ENCODE measurements at regions of chr12 and their contacts with region 1.

Region 1: GRCh38 chr12:53500776-53501614 is at the start of gene TARBP2:
- DNase-seq: peak; percentile 90 to 100 (median 98)
- ATAC-seq: peak; percentile 77
- H3K4me3 ChIP-seq: peak within 1 kb of the TSS; percentile 66
- H3K4me3 Mint-ChIP-seq: peak within 1 kb of the TSS; percentile 96
- H3K27ac ChIP-seq: peak within 1 kb of the TSS; percentile 96 to 97
- H3K27ac Mint-ChIP-seq: peak within 1 kb of the TSS; percentile 98
- H3K4me1 ChIP-seq: peaks cover 43% of the 10 kb centered on the region
- H3K4me1 Mint-ChIP-seq: peaks cover 44% of the 10 kb centered on the region
- H3K27me3 ChIP-seq: no peaks in the 10 kb centered on the region
- H3K27me3 Mint-ChIP-seq: no peaks in the 10 kb centered on the region
- CTCF ChIP-seq: no peak
- total RNA-seq, gene TARBP2: 21.7 to 22.4 TPM

Region 2: DNA sequence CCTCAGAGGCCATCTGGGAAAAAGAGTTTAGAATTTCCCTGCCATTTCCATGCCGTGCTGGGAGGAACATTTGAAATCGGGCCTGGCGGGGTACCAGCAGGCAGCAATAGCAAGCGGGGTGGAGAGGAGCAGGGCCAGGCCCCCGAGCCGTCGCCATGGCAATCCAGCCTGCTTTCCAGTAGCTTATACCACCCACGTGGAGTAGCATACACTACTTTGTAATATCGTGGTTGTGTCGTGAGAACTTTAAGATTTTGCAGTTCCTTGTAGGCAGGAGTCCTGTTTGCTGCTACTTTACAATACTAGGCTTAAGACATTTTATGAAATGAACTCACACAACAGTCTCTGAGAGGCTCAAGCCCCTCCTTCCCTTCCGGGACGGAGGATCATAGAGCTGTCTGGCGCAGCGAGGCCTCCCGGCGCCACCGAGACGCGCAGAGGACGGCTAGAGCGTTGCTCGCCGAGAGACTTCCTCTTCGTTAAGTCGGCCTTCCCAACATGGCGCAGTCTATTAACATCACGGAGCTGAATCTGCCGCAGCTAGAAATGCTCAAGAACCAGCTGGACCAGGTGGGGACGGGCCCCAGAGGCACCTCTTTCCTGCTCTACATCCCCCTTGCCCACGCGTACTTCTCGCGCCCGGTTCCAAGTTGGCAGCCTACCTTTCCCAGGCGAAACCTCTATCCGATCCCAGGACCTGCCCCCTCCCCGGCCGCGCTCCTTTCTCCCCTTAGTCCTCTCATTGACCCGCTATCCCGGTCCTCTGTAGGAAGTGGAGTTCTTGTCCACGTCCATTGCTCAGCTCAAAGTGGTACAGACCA is 205.7 kb before region 1 on chr12 and contains the start of gene PFDN5:
- CTCF ChIA-PET with region 1: no interaction called
- POLR2A ChIA-PET with region 1: interaction called, 9 read pairs
- intact Hi-C with region 1: loop called in 1 of 2 experiments (anchors 1 kb)
- DNase-seq: peak; percentile 76 to 96 (median 86)
- ATAC-seq: peak; percentile 92
- H3K4me3 ChIP-seq: peak within 1 kb of the TSS; percentile 69
- H3K4me3 Mint-ChIP-seq: peak within 1 kb of the TSS; percentile 99
- H3K27ac ChIP-seq: peak within 1 kb of the TSS; percentile 69 to 71
- H3K27ac Mint-ChIP-seq: peak within 1 kb of the TSS; percentile 97
- H3K4me1 ChIP-seq: peaks cover 38% of the 10 kb centered on the region
- H3K4me1 Mint-ChIP-seq: peaks cover 50% of the 10 kb centered on the region
- H3K27me3 ChIP-seq: no peaks in the 10 kb centered on the region
- H3K27me3 Mint-ChIP-seq: no peaks in the 10 kb centered on the region
- CTCF ChIP-seq: no peak
- total RNA-seq, gene PFDN5: 757 to 763 TPM

Region 3: GRCh38 chr12:53441040-53441833 is 59.8 kb before region 1 on chr12 and contains the start of gene PRR13:
- CTCF ChIA-PET with region 1: no interaction called
- POLR2A ChIA-PET with region 1: interaction called, 23 read pairs
- intact Hi-C with region 1: loop called in 1 of 2 experiments (anchors 1 kb)
- DNase-seq: peak; percentile 96 to 100 (median 98)
- ATAC-seq: peak; percentile 97
- H3K4me3 ChIP-seq: peak within 1 kb of the TSS; percentile 61
- H3K4me3 Mint-ChIP-seq: peak within 1 kb of the TSS; percentile 94
- H3K27ac ChIP-seq: peak within 1 kb of the TSS; percentile 59 to 84
- H3K27ac Mint-ChIP-seq: peak within 1 kb of the TSS; percentile 87
- H3K4me1 ChIP-seq: peaks cover 37% of the 10 kb centered on the region
- H3K4me1 Mint-ChIP-seq: peaks cover 48% of the 10 kb centered on the region
- H3K27me3 ChIP-seq: no peaks in the 10 kb centered on the region
- H3K27me3 Mint-ChIP-seq: no peaks in the 10 kb centered on the region
- CTCF ChIP-seq: no peak
- total RNA-seq, gene PRR13: 133 to 142 TPM

Region 4: DNA sequence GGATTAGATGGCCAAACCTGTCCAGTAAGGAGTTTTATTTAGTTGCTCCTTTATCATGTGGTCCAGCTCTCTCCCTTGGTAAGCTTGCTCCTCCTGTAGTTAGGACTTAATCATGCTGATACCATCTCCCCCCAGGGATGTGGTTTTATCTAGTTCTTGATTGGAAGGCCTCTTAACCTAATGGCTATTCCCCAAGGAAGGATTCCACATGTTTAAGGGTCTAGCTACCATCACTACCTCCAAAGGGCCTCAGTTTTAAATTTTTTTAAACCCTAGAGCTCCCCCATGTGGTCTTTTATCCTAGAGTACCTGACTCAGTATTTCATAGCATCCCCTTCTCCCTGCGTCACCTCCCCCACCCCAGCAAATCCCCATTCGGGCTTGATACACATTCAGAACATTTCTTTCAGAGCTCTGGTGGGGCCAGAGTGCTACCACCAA is 24.2 kb before region 1 on chr12:
- CTCF ChIA-PET with region 1: interaction called, 4 read pairs
- POLR2A ChIA-PET with region 1: interaction called, 31 read pairs
- intact Hi-C with region 1: loop called in 1 of 2 experiments (anchors 2 kb)
- DNase-seq: peak in 3 of 14 experiments; percentile 23 to 45 (median 37)
- ATAC-seq: peak; percentile 31
- H3K4me3 ChIP-seq: no peak overlapping the region
- H3K4me3 Mint-ChIP-seq: no peak overlapping the region
- H3K27ac ChIP-seq: no peak overlapping the region
- H3K27ac Mint-ChIP-seq: peak overlapping the region; percentile 52
- H3K4me1 ChIP-seq: peaks cover 11% of the 10 kb centered on the region
- H3K4me1 Mint-ChIP-seq: peaks cover 54% of the 10 kb centered on the region
- H3K27me3 ChIP-seq: no peaks in the 10 kb centered on the region
- H3K27me3 Mint-ChIP-seq: no peaks in the 10 kb centered on the region
- CTCF ChIP-seq: peak; percentile 35

Region 5: GRCh38 chr12:53727310-53728041 is 226.5 kb after region 1 on chr12 and contains the start of gene CALCOCO1:
- CTCF ChIA-PET with region 1: no interaction called
- POLR2A ChIA-PET with region 1: interaction called, 14 read pairs
- intact Hi-C with region 1: loop called in 1 of 2 experiments (anchors 5 kb)
- DNase-seq: peak; percentile 89 to 99 (median 96)
- ATAC-seq: peak; percentile 98
- H3K4me3 ChIP-seq: peak within 1 kb of the TSS; percentile 73
- H3K4me3 Mint-ChIP-seq: peak within 1 kb of the TSS; percentile 92
- H3K27ac ChIP-seq: peak within 1 kb of the TSS; percentile 42 to 52
- H3K27ac Mint-ChIP-seq: peak within 1 kb of the TSS; percentile 82
- H3K4me1 ChIP-seq: peaks cover 27% of the 10 kb centered on the region
- H3K4me1 Mint-ChIP-seq: peaks cover 34% of the 10 kb centered on the region
- H3K27me3 ChIP-seq: no peaks in the 10 kb centered on the region
- H3K27me3 Mint-ChIP-seq: no peaks in the 10 kb centered on the region
- CTCF ChIP-seq: no peak
- total RNA-seq, gene CALCOCO1: 66.8 to 69.3 TPM

Measured in CD4-positive, alpha-beta T cell (primary cell).